Panc1 (cell line): ENCODE measurements at regions of chr10 and their contacts with region 1.

Region 1: GRCh38 chr10:129466703-129467358 is at the start of gene MGMT:
- DNase-seq: peak; percentile 5
- ATAC-seq: peak; percentile 97
- H3K4me3 ChIP-seq: peak within 1 kb of the TSS; percentile 76 to 81
- H3K27ac ChIP-seq: peak within 1 kb of the TSS; percentile 89
- H3K4me1 ChIP-seq: peaks cover 6% of the 10 kb centered on the region
- H3K27me3 ChIP-seq: no peaks in the 10 kb centered on the region
- CTCF ChIP-seq: no peak
- total RNA-seq, gene MGMT: 27.3 TPM

Region 2: DNA sequence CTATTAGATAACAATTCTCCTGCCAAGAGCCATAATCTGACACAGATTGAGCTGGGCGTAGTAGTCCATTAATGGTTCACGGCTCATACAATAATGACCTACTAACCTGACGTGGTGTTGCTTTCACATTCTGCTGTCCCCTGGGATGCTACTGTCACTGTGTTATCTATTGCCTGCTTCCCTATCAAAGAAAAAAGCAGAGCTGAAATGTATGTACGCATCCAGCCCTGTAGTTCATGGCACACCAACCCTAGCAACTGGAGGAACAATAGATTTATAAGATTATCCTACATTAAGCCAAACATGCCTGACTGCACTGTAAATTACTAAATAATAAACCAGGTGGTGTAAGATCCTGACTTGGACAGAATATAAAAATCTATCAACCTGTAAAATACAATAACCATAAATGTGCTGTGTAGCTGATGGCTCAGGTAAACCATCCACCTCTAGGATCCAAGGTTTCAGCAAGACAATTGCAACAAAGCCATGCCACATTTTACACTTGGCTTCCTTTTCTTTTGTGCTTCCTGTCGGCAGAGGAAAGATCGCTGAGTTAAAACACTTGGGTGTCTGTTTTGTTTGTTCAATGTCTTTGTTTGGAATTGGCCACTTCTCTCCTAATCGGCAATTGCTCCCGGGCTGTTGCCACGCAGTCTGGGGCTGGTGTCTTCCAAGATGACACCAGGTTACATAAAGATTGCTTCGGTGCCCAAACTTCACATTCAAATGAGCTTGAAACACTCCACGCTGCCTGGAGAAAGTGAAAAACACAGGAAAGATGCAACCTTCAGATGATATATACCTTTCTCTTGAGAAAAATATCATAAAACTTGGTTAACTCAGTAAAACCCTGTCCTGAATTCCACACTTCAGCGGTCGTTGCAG is 143.7 kb before region 1 on chr10:
- CTCF ChIA-PET with region 1: no interaction called
- POLR2A ChIA-PET with region 1: interaction called, 15 read pairs
- in situ Hi-C with region 1: no loop called
- intact Hi-C with region 1: no loop called
- DNase-seq: no peak
- ATAC-seq: no peak
- H3K4me3 ChIP-seq: no peak overlapping the region
- H3K27ac ChIP-seq: no peak overlapping the region
- H3K4me1 ChIP-seq: no peaks in the 10 kb centered on the region
- H3K27me3 ChIP-seq: peaks cover 2% of the 10 kb centered on the region; the same call in 1 of the 2 replicates
- CTCF ChIP-seq: no peak